ENCODE measurements at regions of chr20 and their contacts with region 1.

Region 1: GRCh38 chr20:46013826-46014516 is 5.3 kb downstream of the MMP9 start:
- DNase-seq: peak; percentile 56 to 72 (median 61)
- ATAC-seq: peak; percentile 82
- H3K4me3 ChIP-seq: no peak overlapping the region
- H3K27ac ChIP-seq: no peak overlapping the region
- H3K4me1 ChIP-seq: peaks cover 18% of the 10 kb centered on the region
- H3K27me3 ChIP-seq: peaks cover 0 to 35% of the 10 kb centered on the region in 2 donors
- CTCF ChIP-seq: peak; percentile 51 to 81 (median 63)
- POLR2A ChIP-seq: no peak

Region 2: DNA sequence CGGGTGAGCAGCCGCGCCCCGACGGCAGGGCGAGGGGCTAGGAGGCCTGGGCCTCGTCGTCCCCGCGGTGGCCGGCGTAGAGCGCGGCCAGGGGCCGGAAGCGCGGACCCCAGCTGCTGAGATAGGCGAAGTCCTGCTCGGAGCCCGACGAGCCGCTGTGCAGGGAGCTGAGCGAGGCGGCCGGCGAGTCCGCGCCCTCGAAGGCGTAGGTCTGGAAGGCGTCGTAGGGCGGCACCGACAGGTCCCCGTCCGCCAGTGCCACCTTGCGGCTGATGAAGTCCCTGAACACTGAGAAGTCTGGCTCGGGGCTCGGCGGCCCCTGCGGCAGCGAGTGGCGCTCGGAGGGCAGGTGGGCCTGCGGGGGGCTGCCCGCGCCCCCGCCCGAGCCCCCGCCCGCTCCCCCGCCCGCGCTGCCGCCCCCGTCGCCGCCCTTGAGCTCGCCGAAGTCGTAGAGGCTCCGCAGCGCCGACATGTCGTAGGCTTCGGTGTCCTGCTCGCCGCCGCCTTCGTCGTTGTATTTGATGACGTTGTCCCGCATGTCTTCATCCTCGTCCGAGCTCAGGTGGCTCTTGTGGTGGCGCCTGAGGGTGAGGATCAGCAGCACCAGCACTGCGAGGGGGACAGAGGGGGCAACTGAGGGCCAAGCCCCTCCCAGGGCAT is 160.6 kb after region 1 on chr20:
- intact Hi-C with region 1: loop called (anchors 10 kb)
- DNase-seq: peak; percentile 74 to 80 (median 74)
- ATAC-seq: peak; percentile 79
- H3K4me3 ChIP-seq: no peak overlapping the region
- H3K27ac ChIP-seq: no peak overlapping the region
- H3K4me1 ChIP-seq: peaks cover 13% of the 10 kb centered on the region
- H3K27me3 ChIP-seq: peaks cover 0 to 12% of the 10 kb centered on the region in 2 donors
- CTCF ChIP-seq: peak; percentile 31 to 70 (median 53)
- POLR2A ChIP-seq: no peak

Region 3: DNA sequence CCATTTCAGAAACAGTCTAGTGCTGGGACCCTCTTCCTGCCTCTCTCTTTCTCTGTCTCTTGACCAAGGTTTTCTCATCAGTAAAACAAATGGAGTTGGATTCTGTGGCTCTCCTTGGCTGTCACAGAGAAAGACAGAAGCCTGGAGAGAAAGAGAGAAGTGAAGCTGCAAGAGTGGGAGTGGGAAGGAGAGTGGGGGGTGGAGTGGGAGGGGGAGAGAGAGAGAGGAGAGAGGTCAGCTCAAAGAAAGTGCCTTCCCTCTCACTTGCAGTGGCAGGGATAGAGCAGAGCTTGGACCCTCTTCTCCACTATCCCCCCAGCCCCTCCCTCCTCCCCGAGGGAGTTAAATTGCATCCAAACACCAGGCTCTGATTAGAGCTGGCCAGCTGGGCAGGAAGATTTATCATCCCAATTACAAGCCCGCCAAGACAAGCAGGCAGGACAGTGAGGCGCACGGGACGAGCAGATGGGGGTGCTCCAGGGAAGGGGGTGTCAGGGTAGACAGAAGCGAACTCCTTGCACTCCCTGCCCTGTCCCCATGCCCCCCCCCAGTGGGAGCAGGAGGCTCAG is 178.5 kb after region 1 on chr20:
- intact Hi-C with region 1: no loop called
- DNase-seq: no peak
- ATAC-seq: no peak
- H3K4me3 ChIP-seq: no peak overlapping the region
- H3K27ac ChIP-seq: no peak overlapping the region
- H3K4me1 ChIP-seq: no peaks in the 10 kb centered on the region
- H3K27me3 ChIP-seq: no peaks in the 10 kb centered on the region
- CTCF ChIP-seq: no peak
- POLR2A ChIP-seq: no peak